Posterior cingulate gyrus (tissue), 11 donors: ENCODE measurements at regions of chr14 and their contacts with region 1.

Region 1: DNA sequence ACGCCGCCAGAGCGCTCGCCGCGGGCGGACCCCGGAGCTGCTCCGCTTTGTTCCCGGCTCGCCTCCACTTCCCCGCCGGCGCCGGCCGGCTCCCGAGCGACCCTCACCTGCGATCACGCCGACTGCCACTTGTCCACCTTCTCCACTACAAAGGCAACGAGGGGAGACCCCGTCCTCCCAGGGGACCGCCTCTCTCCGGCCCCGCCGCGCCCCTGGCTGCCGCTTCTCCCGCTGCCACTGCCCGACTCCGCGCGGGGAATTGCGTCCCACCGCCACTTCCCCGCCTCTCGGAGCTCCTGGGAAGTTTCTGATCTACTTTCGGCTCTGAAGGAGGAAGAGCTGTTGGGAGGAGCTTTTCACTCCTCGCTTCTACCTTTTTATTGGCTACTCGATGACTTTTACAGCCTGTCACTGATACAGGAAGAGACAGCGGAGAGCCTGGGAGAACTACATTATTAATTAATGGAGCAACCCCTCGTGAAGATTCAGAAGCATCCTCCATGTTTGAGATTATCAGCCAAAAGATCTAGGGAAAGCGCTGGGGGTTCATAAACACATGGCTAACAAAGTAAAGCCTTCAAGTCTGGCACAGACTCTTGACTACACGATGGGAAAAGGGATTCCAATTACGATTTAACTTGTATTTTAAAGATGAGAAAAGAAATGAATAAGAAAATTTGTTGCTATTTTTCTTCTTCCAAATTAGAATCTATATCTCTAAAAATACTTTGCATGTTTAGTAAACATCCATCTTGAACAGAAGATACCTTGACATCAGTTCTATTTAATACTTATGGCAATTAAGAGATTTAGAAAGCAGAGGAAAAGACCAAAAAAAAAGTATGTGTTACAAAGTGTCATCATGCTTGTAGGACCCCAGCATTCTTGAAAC is at the start of gene BAZ1A:
- DNase-seq: peak in 9 of 10 donors; percentile 18 to 89 (median 45)

Region 2: DNA sequence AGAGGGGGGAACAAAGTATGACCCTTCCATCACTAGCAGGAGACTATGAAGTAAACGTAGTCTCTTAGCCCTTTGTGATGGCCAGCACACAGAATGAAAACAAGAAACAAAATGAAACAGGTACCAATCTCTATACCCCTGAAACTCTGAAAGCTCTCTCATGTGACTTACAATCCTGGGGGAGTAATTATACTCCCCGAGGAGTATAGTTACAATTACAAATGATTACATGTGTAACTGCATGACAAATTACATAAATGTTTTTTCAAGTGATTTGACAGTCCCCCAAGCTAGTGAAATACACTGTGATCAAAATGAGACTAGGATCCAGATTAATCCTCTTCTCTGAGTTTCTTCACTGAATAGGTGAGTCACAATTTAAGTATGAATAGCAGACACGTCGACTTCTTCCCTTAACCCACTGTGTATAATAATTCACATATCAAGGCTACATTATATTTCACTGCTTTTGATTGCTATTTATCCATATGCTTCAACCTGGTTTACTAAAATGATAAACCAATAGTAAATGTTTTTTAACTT is 487.2 kb before region 1 on chr14:
- intact Hi-C with region 1: no loop called
- DNase-seq: no peak

Region 3: DNA sequence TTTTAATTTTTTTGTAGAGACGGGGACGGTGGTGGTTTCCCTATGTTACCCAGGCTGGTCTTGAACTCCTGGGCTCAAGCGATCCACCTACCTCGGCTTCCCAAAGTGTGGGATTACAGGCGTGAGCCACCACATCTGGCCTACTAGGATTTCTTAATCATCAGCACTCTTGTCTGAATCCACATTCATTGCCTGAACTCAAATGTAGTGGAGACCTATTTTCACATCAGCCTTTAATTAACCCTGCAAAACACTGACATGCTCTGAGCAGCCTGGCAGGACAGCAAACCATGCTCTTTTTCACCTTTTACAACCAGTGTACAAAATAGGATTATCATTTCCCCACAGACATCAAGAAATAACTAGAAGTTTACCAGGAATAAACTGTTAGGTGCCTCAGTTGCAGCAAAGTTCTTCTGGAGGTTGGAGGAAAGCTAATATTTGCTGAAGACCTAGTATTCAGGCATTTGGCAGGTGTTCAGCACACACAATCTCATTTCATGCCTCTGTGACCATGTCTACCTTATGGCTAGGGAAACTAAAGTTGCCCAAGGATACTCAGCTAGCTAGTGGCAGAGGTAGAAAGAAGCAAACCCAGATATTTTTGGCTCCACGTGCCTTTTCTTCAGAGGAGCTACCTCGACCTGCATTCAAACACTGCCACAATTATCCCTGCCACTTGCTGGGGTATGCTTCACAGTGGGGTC is 198.6 kb before region 1 on chr14:
- intact Hi-C with region 1: loop called (anchors 5 kb)
- DNase-seq: no peak

Region 4: DNA sequence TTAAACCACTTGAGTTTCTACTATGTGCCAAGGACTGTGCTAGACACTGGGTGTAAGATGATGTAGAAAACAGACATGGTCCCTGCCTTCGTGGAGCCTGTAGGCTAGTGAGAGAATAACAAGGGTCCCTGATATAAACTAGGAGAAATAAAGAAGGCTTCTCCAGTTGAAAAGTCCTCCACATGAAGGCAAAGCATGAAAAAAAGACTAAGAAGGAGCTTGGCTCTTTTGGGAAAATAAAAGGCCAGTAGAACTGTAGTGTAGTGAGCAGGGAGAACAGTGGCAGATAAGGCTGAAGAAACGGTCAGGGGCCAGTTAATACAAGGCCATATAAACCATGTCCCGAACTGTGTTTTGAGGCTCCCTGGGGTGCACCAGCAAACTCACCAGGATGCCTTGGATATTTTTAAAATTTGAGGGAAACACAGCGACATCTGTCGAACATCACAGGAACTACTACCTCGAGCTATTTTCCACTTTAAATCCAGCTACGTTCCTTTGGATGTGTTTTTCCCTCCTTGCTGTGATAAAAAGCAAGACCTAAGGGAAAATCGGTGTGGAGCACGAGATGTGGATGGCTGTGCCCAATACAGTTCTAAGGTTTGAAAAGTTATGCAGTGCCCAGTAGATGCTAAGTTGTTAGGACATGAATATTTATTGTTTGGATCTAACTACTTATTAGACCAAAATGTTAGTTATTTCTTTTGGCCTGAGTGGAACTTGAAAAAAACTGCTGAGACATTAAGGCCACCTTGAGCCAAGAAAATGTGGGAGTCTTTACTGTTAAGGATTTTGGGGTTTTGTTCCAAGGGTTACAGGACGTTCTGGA is 152.3 kb before region 1 on chr14:
- intact Hi-C with region 1: loop called (anchors 5 kb)
- DNase-seq: peak in 4 of 10 donors; percentile 25 to 48 (median 44)

Region 5: DNA sequence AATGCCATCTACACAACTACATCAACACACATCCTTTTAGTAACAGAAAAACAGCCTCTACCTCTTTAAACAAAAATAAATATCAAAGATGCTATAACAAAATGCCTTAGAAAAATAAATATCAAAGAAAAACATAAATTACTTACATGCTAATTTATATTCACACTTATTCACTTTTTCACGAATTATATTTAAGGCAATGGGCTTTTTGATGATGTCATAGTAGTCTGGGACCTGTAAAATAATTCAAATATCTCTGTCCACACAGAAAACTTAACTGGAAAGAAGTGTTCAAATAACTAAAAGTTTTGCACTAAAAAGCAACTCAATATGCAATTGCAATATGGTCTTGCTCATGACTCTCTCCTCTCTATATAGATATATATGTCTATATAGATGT is 120.6 kb before region 1 on chr14:
- intact Hi-C with region 1: no loop called
- DNase-seq: no peak

Region 6: DNA sequence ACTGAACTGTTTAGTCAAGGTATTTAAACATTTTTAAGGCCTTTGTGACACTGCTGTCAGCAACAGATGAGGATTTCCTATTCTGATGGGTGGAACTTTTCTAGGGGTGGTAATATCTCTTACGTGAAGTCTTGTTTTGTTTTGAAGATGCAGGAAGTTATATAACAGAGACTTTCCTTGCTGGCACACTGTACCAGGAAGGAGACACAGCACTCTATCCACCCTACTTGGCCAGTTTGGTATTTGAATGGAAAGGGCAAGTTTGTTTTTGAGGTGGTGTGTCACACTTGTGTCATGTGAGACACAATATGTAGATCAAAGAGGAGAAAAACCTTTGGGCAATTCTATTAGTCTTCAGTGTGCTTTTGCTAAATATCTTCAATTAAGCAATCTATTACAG is 55.9 kb after region 1 on chr14:
- intact Hi-C with region 1: no loop called
- DNase-seq: no peak

Region 7: DNA sequence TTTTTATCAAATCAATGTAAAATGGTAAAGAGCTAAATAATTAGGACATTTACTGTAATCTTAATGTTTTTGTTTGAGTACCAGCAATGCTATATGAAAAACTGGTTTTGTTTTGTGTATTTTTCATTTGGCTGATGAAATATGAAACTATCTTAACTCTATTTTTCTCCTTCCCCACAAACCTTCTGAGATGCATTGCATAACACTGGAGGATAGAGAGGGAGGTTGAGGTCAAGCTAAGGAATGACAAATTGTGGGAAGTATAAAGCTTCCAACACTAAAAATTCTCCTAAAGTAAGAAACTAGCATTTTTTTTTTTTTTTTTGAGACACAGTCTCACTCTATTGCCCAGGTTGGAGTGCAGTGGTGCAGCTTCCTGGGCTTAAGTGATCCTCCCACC is 76.0 kb after region 1 on chr14:
- intact Hi-C with region 1: no loop called
- DNase-seq: no peak

Region 8: GRCh38 chr14:34982417-34983147 is 107.3 kb after region 1 on chr14 and contains the start of gene SRP54:
- intact Hi-C with region 1: loop called (anchors 5 kb)
- DNase-seq: peak; percentile 95 to 100 (median 98)

Region 9: DNA sequence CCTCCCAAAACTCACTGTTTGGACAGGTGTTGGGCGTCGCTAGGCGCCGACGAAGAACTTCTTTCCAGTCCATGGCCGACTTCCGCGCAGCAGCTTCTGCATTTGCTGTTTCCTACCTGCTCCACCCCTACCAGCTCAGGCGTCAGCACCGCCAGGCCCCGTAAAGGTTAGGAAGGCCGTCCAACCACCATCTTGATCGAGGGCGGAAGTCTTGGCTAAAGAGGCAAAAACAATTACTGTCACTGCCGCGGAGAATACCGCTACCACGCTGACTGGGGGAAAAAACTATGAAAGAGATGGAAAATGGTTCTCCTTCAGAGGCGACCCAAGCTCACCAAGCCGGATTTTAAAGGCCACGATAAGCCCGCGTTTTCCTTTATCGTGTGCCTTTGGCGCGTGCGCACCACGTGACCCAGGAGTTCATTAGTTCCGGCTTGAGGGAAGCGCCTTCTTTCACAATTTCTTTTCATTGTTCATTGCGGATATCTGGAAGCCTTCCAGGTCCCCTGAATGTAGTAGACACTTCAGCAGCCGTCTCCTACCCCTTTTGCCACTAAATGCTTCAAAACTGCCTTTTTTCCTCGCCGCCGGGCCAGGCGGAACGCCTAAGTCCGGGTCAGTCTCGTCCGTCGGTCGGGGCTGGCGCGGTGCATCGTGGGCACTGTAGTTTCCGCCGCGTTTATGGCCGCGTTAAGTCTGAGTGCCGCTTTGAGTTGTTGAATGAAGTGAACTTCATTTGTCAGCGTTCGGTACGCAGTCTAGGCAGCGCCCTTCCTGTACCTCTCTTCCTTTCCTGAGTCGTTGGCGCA is 246.8 kb after region 1 on chr14 and contains the starts of genes PPP2R3C and PRORP:
- intact Hi-C with region 1: loop called (anchors 10 kb)
- DNase-seq: peak; percentile 82 to 98 (median 89)